ENCODE measurements at regions of chr17 and their contacts with region 1.

Region 1: GRCh38 chr17:17757391-17757791 is 76.1 kb downstream of the RAI1 start:
- DNase-seq: peak in 8 of 10 donors; percentile 33 to 77 (median 50)
- ATAC-seq: peak; percentile 65 to 73
- H3K4me3 Mint-ChIP-seq: peak overlapping the region; percentile 70 to 89 (median 83)
- H3K27ac Mint-ChIP-seq: peak overlapping the region; percentile 90 to 98 (median 94)
- H3K4me1 Mint-ChIP-seq: peaks cover 47 to 88% (median 81%) of the 10 kb centered on the region in 4 donors
- H3K27me3 Mint-ChIP-seq: no peaks in the 10 kb centered on the region

Region 2: GRCh38 chr17:17636272-17636885 is 121.0 kb before region 1 on chr17:
- POLR2A ChIA-PET with region 1: no interaction called
- DNase-seq: no peak
- ATAC-seq: no peak
- H3K4me3 Mint-ChIP-seq: no peak overlapping the region
- H3K27ac Mint-ChIP-seq: no peak overlapping the region
- H3K4me1 Mint-ChIP-seq: peaks cover 0 to 6% (median 2%) of the 10 kb centered on the region in 4 donors
- H3K27me3 Mint-ChIP-seq: peaks cover 0 to 7% (median 0%) of the 10 kb centered on the region in 5 donors

Region 3: DNA sequence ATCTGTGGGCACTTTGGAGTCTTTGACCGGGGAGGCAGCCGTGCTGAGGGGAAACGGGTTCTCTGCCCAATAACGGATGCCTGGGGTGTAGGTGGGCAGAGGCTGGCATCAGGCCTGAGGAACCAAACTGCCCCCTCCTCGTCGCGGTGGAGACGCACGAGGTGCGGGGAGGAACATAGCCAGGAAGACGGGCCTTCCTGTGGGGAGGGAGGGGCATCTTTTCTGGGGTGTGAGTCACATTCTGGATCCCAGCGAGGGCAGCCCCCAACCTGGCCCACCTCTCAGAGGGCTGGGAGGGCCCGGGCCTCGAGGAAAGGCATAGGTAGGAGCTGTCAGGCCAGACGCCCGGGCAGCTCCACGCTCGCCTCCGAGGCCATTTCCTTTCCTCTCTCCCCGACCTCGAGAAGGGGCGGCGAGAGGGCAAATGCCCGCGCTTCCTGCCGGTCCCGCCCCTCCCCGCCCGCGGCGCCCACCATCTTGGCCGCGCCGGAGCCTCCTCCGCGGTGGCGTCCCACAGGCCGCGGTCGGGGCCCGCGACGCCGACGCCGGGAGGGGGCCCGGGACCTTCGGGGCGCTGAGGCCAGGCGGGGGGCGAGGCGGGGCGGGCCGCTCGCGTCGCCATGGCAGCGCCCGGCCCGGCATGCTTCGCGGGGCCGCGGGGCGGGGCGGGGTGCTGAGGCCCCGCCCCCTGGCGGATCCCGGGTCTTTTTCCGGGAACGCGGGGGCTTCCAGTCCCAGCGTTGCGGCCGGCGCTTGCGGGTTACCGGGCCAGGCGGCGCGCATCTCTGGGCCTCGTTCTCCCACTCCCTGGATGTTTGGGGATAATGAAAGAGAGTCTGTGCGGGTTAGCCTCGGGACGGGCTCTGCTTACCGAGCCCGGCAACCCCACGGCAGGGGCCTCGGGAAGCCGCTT is 63.0 kb before region 1 on chr17:
- POLR2A ChIA-PET with region 1: interaction called, 25 read pairs
- DNase-seq: peak; percentile 47 to 87 (median 76)
- ATAC-seq: peak; percentile 68 to 73
- H3K4me3 Mint-ChIP-seq: peak overlapping the region; percentile 81 to 96 (median 91)
- H3K27ac Mint-ChIP-seq: peak overlapping the region; percentile 94 to 100 (median 99)
- H3K4me1 Mint-ChIP-seq: peaks cover 51 to 87% (median 73%) of the 10 kb centered on the region in 4 donors
- H3K27me3 Mint-ChIP-seq: no peaks in the 10 kb centered on the region

Region 4: DNA sequence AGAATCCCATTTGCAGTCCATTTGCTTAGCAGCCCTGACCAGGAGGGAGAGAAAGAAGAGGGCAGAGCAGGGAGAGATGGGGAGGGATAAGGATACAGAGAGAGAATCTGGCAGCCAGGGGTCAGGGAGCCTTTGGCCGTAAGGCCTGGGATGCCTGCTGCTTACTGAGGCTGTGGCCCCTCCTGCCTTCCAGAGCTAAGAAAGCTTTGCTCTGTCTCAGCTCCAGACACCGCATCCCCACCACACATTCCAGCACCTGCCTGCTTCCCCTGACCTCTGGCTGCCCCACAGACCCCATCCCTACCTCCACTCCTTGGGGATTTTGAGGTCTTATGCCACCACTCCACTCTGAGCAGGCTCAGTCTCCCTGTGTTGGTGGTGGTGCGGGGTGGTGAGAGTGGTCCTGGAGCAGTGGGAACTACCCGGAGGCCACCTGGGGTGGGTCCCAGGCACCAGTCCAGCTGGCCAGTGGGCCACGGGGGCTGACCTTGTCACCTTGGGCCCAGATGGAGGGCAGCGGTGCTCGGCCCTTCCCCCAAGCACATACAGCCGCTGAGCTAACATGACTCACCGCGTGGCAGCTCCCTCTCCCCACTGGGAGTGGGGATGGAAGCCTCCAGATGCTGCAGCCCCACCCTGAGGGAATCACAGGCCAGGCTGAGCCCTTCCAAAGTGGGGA is 17.9 kb before region 1 on chr17:
- POLR2A ChIA-PET with region 1: interaction called, 21 read pairs
- DNase-seq: no peak
- ATAC-seq: no peak
- H3K4me3 Mint-ChIP-seq: peak overlapping the region in 7 of 10 donors; percentile 17 to 74 (median 62)
- H3K27ac Mint-ChIP-seq: peak overlapping the region in 9 of 10 donors; percentile 84 to 94 (median 91)
- H3K4me1 Mint-ChIP-seq: peaks cover 33 to 72% (median 56%) of the 10 kb centered on the region in 4 donors
- H3K27me3 Mint-ChIP-seq: no peaks in the 10 kb centered on the region

Region 5: DNA sequence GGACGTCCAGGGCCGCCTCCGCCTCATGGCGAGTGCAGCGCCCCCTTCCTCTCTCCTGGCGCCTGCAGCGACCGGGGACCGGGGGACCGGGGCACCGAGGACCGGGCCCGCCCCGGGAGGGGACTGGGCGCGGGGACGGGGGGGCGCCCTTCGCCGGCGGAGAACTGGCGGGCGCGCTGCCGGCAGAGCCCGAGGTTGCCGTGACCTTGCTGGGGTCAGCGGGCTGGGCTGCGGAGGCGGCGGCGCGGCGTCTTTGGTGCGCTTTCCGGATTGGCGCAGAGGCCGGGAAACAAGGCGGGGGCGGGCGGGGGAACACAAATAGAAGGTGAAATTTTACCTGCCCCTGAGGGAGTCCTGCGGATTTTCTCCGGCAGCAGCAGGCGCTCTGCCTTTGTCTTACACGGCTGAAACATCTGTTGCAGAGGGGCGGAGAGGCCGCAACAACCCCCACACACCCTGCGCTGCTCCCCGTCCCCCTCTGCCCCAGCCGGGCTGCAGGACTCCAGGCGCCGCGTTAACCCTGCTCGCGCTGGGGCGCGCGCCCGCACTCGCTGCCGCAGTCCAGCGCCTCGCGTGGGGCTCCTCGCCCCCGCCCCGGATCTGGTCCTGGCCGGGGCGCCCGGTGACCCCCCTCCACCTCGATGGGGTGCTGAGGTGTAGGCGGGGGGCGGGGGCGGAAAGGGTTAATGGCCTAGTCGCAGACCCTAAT is 25.9 kb after region 1 on chr17:
- POLR2A ChIA-PET with region 1: interaction called, 55 read pairs
- DNase-seq: peak; percentile 42 to 80 (median 60)
- ATAC-seq: peak; percentile 61 to 66
- H3K4me3 Mint-ChIP-seq: peak overlapping the region; percentile 78 to 94 (median 91)
- H3K27ac Mint-ChIP-seq: peak overlapping the region in 9 of 10 donors; percentile 31 to 95 (median 81)
- H3K4me1 Mint-ChIP-seq: peaks cover 28 to 46% (median 32%) of the 10 kb centered on the region in 4 donors
- H3K27me3 Mint-ChIP-seq: no peaks in the 10 kb centered on the region

Region 6: GRCh38 chr17:17849845-17850373 is 92.5 kb after region 1 on chr17:
- POLR2A ChIA-PET with region 1: interaction called, 10 read pairs
- DNase-seq: peak; percentile 45 to 85 (median 72)
- ATAC-seq: peak; percentile 58 to 72
- H3K4me3 Mint-ChIP-seq: peak overlapping the region; percentile 55 to 86 (median 77)
- H3K27ac Mint-ChIP-seq: peak overlapping the region; percentile 91 to 99 (median 96)
- H3K4me1 Mint-ChIP-seq: peaks cover 49 to 87% (median 70%) of the 10 kb centered on the region in 4 donors
- H3K27me3 Mint-ChIP-seq: no peaks in the 10 kb centered on the region